PC-9 (cell line): ENCODE measurements at regions of chr20 and their contacts with region 1.

Region 1: DNA sequence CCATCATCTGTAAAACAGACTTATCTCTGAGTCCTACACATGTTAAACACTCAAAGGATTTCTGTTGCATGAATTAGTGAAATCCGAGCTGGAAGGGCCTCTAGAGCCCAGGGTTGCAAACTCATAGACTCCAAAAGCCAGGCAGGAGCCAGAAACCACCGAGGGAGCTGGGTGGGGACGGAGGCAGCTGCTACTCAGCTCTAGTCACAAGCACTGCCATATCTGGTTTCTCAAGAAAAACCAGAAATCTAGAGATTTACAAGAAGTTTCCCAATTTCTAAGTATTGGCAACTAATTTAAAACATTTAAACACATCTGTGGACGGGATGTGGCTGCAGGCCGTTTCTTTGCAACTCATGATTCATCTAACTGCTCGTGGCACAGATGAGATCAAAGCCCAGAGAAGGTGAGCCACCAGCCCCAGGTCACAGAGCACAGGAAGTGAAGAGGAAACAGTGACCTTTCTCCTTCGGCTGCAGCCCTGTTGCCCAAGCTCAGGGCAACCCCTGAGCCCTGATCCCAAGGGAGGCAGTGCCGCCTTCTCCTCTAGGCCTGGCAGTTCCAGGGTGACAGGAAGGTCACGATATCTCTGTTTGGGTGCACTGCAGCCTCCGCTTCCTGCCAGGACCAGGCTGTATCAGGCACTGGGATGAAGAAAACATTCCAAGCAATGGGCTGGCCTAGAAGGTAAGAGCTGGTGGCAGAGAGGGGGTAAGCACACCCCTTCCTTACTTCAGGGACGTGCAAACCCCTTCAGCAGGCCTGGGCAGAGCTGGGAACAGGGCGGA is 26.4 kb upstream of the PTGIS start:
- DNase-seq: peak; percentile 84 to 100
- H3K4me3 ChIP-seq: peak overlapping the region; percentile 7; the same call in 1 of the 2 replicates
- H3K27ac ChIP-seq: peak overlapping the region; percentile 98
- H3K4me1 ChIP-seq: peaks cover 85% of the 10 kb centered on the region
- H3K27me3 ChIP-seq: no peaks in the 10 kb centered on the region
- CTCF ChIP-seq: no peak

Region 2: DNA sequence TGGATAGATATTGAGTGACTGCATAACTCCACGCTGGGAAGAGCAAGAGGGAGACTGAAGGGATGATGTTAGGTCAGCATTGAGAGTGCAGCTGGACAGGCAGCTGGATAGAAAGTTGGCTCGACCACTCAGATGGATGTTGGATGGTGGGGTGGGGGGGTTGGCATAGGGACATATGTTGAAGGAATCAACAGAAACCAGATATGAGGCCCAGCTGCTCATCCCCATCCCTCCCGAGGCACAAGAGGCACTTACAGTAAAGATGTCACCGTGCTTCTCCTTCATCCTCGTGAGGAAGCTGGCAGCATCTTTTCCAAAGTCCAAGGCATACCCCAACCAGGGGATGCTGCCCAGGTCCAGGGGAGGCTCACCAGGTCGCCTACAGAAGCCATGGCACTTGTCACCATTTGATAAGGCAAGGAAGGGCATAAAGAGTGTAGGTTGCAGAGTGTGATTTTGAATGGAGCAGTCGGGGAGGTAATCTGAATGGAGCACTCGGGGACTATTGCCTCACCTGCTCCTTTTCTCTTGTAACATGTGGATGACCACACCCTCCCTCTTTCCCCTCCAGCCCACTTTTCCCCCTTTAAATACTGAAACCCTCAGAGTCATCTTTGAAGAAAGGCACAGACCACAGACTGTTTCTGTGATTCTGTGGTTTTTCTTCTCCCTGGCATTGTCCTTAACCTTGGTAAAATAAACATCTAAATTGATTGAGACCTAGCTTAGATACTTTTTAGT is 44.4 kb before region 1 on chr20:
- CTCF ChIA-PET with region 1: interaction called, 3 read pairs
- POLR2A ChIA-PET with region 1: no interaction called
- intact Hi-C with region 1: loop called (anchors 1 kb)
- DNase-seq: no peak
- H3K4me3 ChIP-seq: no peak overlapping the region
- H3K27ac ChIP-seq: peak overlapping the region; percentile 92
- H3K4me1 ChIP-seq: peaks cover 54% of the 10 kb centered on the region
- H3K27me3 ChIP-seq: no peaks in the 10 kb centered on the region
- CTCF ChIP-seq: no peak

Region 3: DNA sequence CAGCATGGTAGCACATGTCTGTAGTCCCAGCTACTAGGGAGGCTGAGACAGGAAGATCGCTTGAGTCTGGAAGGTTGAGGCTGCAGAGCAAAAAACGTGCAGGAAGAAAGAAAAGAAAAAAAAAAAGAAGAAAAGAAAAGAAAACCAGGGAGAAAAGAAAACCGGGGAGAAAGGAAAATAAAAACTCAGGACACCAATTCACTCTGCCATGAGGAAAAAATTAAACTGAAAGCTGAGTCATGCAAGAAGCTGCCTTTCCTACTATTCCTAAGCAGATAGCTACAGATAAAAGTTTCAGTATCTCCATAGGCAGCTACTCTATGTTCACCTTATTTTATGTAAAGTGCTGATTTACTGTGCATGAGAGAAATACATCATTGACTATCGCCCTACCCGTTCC is 36.9 kb before region 1 on chr20:
- CTCF ChIA-PET with region 1: interaction called, 3 read pairs
- POLR2A ChIA-PET with region 1: interaction called, 15 read pairs
- intact Hi-C with region 1: no loop called
- DNase-seq: no peak
- H3K4me3 ChIP-seq: no peak overlapping the region
- H3K27ac ChIP-seq: peak overlapping the region; percentile 39
- H3K4me1 ChIP-seq: peaks cover 86% of the 10 kb centered on the region
- H3K27me3 ChIP-seq: no peaks in the 10 kb centered on the region
- CTCF ChIP-seq: no peak

Region 4: DNA sequence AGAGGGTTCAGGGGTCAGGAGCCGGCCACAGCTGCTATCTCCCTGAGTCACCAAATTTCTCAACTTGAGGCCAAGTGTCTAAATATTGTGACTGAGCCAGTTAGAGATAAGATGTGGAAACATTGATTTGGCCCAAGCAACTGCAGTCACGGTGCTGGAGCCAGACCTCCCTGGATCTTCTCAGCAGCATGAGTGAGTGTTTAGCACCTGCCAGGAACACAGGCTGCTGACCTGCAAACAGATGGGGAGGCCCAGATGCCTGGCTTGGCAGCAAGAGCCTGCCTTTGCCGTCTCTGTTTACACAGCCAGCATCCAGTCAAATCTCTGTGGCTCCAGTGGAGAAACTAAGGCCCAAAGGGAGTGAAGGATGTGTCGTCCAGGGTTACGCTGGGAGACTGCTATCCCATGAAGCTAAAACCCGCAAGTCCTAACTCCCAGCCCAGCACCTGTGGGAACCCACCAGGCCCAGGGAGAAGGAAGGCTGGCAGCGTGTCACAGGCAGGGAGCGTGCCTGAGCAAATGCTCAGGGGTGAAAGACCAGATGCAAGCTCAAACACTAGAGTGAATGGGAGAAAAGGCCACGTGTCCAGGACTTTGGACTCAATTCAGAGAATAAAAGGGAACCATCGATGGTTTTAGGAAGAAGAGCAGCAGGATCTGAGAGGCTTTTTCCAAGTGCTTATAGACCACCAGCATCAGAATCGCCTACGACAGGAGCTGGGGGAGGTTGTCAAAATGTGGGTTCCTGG is 10.5 kb before region 1 on chr20:
- CTCF ChIA-PET with region 1: no interaction called
- POLR2A ChIA-PET with region 1: interaction called, 5 read pairs
- intact Hi-C with region 1: loop called (anchors 1 kb)
- DNase-seq: peak; percentile 88 to 99
- H3K4me3 ChIP-seq: peak overlapping the region; percentile 15; the same call in 1 of the 2 replicates
- H3K27ac ChIP-seq: peak overlapping the region; percentile 94
- H3K4me1 ChIP-seq: peaks cover 98% of the 10 kb centered on the region
- H3K27me3 ChIP-seq: no peaks in the 10 kb centered on the region
- CTCF ChIP-seq: no peak; the same call in 1 of the 2 replicates

Region 5: GRCh38 chr20:49685809-49686208 is 91.5 kb after region 1 on chr20:
- CTCF ChIA-PET with region 1: no interaction called
- POLR2A ChIA-PET with region 1: no interaction called
- intact Hi-C with region 1: no loop called
- DNase-seq: no peak
- H3K4me3 ChIP-seq: no peak overlapping the region
- H3K27ac ChIP-seq: peak overlapping the region; percentile 91
- H3K4me1 ChIP-seq: peaks cover 98% of the 10 kb centered on the region
- H3K27me3 ChIP-seq: no peaks in the 10 kb centered on the region
- CTCF ChIP-seq: no peak

Region 6: DNA sequence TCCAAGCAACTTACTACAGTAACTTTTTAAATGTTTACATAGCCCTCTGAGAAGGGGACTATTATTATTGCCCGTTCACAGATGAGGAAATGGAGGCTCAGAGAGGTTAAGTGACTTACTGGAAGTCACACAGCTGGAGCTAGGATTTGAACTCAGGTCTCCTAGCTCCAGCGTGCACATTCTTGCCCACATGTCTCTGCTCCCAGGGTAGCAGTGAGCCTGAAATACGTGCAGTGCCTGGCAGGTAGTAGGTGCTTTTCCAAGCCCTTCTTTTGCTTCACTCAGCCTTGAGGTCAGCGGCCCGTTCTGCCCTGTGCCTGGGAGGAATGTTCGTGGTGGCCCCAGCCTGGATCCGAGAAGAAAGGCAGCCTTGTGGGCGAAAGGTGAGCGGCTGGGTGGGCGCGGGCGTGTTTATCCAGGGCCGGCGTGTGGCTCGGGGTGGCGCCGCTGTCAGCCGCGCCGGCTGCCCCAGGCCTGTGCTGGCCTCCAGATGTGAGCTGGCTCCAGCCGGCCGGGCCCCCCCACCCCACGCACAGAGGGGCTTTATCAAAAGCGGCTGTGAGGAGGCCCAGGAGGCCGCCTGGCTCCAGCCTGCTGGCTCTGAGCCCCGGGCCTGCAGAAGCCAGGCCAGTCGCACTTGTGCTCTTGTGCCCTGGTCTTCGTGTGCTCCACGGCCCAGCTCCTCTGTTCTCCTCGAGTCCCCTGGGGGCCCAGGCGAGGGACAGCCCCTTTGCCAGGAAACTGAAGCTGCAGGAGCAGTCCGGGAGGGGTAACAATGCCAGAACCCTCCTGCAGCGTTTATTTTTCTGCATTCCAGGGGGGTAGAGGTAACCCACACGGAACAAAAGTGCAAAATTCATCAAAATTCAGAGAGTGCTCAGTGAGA is 460.5 kb after region 1 on chr20:
- CTCF ChIA-PET with region 1: no interaction called
- POLR2A ChIA-PET with region 1: no interaction called
- intact Hi-C with region 1: no loop called
- DNase-seq: no peak
- H3K4me3 ChIP-seq: no peak overlapping the region
- H3K27ac ChIP-seq: no peak overlapping the region
- H3K4me1 ChIP-seq: peaks cover 7% of the 10 kb centered on the region; the same call in 1 of the 2 replicates
- H3K27me3 ChIP-seq: no peaks in the 10 kb centered on the region
- CTCF ChIP-seq: no peak

Region 7: GRCh38 chr20:50115591-50116372 is 521.4 kb after region 1 on chr20:
- CTCF ChIA-PET with region 1: no interaction called
- POLR2A ChIA-PET with region 1: interaction called, 14 read pairs
- intact Hi-C with region 1: no loop called
- DNase-seq: peak; percentile 90 to 95
- H3K4me3 ChIP-seq: peak overlapping the region; percentile 73
- H3K27ac ChIP-seq: peak overlapping the region; percentile 20; the same call in 1 of the 2 replicates
- H3K4me1 ChIP-seq: peaks cover 27% of the 10 kb centered on the region
- H3K27me3 ChIP-seq: no peaks in the 10 kb centered on the region
- CTCF ChIP-seq: no peak